Cardiac septum (tissue), 1 donor: ENCODE measurements at regions of chr14 and their contacts with region 1.

Region 1: GRCh38 chr14:81220830-81221578 is at the start of gene GTF2A1:
- DNase-seq: peak; percentile 98
- total RNA-seq, gene GTF2A1: 18.0 TPM

Region 2: GRCh38 chr14:81533536-81534343 is 312.7 kb after region 1 on chr14 and contains the start of gene SEL1L:
- intact Hi-C with region 1: loop called (anchors 5 kb)
- DNase-seq: peak; percentile 99
- total RNA-seq, gene SEL1L: 64.8 TPM